ENCODE measurements at regions of chr5 and their contacts with region 1.

Region 1: GRCh38 chr5:132272311-132273210 is 15.1 kb downstream of the PDLIM4 start:
- DNase-seq: peak; percentile 58 to 75
- ATAC-seq: peak; percentile 69 to 83; a peak in 5 of 6 replicates
- H3K4me3 ChIP-seq: no peak overlapping the region
- H3K27ac ChIP-seq: peak overlapping the region; percentile 46 to 78; a peak in 5 of 6 replicates
- H3K4me1 ChIP-seq: peaks cover 7% of the 10 kb centered on the region; the same call in 1 of the 3 replicates
- CTCF ChIP-seq: peak; percentile 85
- EP300 ChIP-seq: no peak
- POLR2A ChIP-seq: no peak
- RAD21 ChIP-seq: peak; percentile 70 to 75

Region 2: DNA sequence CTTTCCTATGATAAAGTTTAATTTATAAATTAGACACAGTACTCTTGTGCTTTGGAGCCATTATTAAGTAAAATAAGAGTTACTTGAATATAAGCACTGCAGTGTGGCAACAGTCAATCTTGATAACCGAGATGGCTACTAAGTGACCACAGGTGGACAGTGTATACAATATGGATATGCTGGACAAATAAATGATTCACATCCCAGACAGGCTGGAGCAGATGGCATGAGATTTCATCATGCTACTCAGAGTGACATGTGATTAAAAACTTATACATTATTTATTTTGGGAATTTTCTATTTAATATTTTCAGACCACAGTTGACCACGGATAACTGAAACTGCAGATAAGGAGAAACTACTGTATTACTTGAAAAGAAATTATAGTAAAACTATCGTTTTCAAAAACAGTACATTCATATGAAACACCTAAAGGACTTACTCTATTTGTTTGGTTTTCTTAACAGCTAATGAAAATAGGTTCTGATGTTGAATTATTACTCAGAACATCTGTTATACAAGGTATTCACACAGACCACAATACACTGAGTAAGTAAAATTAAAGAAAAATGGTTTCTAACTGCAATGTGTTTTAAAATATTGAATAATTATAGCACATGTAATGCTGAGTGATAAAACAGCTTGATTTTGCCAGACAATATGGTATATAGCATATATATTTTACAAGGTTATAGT is 1085.9 kb before region 1 on chr5:
- CTCF ChIA-PET with region 1: no interaction called
- POLR2A ChIA-PET with region 1: no interaction called
- DNase-seq: peak in 1 of 2 experiments; percentile 62
- ATAC-seq: peak; percentile 69 to 95
- H3K4me3 ChIP-seq: no peak overlapping the region
- H3K27ac ChIP-seq: peak overlapping the region; percentile 55 to 69; a peak in 5 of 6 replicates
- H3K4me1 ChIP-seq: peaks cover 22% of the 10 kb centered on the region
- CTCF ChIP-seq: no peak
- EP300 ChIP-seq: peak; percentile 29 to 62; a peak in 2 of 5 replicates
- POLR2A ChIP-seq: no peak
- RAD21 ChIP-seq: no peak

Region 3: DNA sequence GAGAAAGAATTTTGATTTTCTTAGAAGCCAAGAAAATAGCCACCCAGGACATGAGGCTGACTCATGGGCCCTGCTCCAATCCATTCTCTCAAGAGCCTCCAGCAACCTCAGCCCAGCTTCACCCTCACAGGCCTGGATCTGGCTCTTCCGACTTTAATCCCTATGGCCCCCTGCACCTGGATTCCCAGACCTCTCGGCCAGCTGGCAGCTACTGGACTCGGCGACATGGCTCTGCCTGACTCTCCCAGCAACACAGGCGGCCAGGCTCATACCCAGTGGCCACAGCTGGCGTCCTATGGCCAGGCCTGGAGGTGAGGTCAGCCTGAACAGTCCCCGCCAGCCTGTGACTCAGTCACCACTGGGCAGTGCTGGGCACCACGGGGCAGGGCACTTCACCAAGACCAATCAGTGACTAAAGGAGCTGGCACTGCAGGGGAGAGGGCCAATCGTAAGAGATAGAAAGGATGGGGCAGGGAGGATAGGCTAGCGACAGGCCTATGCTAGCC is 21.3 kb before region 1 on chr5:
- CTCF ChIA-PET with region 1: interaction called, 11 read pairs
- POLR2A ChIA-PET with region 1: no interaction called
- DNase-seq: no peak
- ATAC-seq: peak in 1 of 2 experiments; percentile 53; a peak in 3 of 6 replicates
- H3K4me3 ChIP-seq: no peak overlapping the region
- H3K27ac ChIP-seq: no peak overlapping the region
- H3K4me1 ChIP-seq: peaks cover 8% of the 10 kb centered on the region; the same call in 2 of the 3 replicates
- CTCF ChIP-seq: no peak
- EP300 ChIP-seq: no peak
- POLR2A ChIP-seq: no peak
- RAD21 ChIP-seq: no peak

Region 4: DNA sequence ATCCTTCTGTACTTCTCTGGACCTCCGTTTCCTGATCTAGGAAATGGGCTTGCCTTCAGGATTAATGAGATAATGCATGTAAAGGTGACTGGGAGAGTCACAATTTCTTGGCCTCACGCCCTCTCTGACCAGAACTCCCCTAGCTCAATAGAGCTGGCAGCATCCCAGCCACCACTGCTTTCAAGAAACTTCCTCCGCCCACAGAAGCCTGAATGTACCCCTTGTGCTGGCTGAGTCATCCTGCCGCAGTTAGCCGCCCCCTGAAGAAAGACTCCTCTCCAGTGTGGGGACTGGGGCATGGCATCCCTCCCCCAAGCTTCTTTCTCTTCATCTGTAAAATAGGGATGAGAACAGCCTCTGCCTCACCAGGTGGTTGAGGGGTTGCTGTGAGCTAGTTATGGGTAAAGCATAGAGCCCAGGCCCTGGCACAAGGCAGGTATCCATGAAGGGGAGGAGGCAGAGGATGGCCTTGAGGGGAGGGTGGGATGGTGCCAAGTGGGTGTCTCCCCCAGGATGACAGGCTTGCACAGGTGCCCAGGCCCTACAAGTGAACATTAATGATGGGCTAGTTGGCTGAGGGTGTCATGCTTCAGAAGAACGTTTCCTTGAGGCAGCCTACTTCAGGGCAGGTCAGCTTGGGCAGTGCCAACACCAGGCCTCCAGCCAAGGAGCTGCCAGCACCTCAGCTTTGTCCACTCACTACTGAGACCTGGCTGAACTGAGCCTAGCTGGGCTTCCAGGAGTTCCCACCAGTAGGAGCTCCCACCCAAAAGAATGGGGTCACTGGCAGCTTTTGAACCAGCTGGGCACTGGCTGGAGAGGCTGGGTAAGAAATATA is 11.6 kb before region 1 on chr5:
- CTCF ChIA-PET with region 1: interaction called, 63 read pairs
- POLR2A ChIA-PET with region 1: no interaction called
- DNase-seq: no peak
- ATAC-seq: no peak
- H3K4me3 ChIP-seq: no peak overlapping the region
- H3K27ac ChIP-seq: peak overlapping the region in 1 of 2 experiments; percentile 72; a peak in 3 of 6 replicates
- H3K4me1 ChIP-seq: peaks cover 44% of the 10 kb centered on the region
- CTCF ChIP-seq: no peak
- EP300 ChIP-seq: no peak
- POLR2A ChIP-seq: no peak
- RAD21 ChIP-seq: no peak

Region 5: DNA sequence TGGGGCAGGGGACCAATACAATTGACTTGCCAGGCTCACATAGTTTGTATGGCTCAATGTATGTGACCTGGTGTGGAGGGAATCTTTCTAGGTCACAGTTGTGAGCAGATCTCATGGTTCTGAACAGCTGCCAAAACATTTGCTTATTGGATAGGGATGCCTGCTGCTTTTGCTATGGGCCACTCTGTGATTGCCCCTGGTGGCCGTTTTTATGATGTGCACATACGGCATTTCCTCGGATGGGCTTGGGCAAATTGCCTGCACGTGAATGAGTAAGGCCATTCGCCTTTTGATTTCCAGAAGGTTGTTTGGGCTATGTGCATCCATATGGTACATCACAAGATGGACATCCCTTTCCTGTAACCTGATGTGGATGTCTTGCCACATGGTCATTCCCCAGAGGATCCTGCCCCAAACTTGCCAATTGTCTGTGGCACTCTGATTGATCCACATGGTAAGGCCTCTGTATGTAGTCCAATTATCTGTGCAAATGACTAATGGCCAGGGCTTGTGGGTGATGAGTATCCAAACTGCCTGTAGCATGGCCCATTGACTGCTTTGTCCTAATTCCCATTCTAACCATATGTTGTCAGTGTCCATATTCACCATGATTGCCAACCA is 11.0 kb after region 1 on chr5:
- CTCF ChIA-PET with region 1: interaction called, 27 read pairs
- POLR2A ChIA-PET with region 1: no interaction called
- DNase-seq: peak; percentile 43 to 57
- ATAC-seq: peak; percentile 48 to 87; a peak in 4 of 6 replicates
- H3K4me3 ChIP-seq: no peak overlapping the region
- H3K27ac ChIP-seq: no peak overlapping the region
- H3K4me1 ChIP-seq: no peaks in the 10 kb centered on the region
- CTCF ChIP-seq: peak; percentile 21; the same call in 2 of the 3 replicates
- EP300 ChIP-seq: no peak
- POLR2A ChIP-seq: no peak
- RAD21 ChIP-seq: peak in 1 of 2 experiments; percentile 32; a peak in 1 of 5 replicates

Region 6: GRCh38 chr5:132293066-132293991 is 20.8 kb after region 1 on chr5:
- CTCF ChIA-PET with region 1: interaction called, 27 read pairs
- POLR2A ChIA-PET with region 1: interaction called, 13 read pairs
- DNase-seq: peak; percentile 91
- ATAC-seq: peak; percentile 67 to 74
- H3K4me3 ChIP-seq: peak overlapping the region; percentile 65
- H3K27ac ChIP-seq: peak overlapping the region; percentile 95 to 99
- H3K4me1 ChIP-seq: peaks cover 30% of the 10 kb centered on the region
- CTCF ChIP-seq: peak; percentile 20; the same call in 1 of the 3 replicates
- EP300 ChIP-seq: 0 out of 5 replicates have a peak, but pooled peaks of 1 of the 2 experiments have one; percentile 14
- POLR2A ChIP-seq: peak; percentile 94
- RAD21 ChIP-seq: no peak

Region 7: DNA sequence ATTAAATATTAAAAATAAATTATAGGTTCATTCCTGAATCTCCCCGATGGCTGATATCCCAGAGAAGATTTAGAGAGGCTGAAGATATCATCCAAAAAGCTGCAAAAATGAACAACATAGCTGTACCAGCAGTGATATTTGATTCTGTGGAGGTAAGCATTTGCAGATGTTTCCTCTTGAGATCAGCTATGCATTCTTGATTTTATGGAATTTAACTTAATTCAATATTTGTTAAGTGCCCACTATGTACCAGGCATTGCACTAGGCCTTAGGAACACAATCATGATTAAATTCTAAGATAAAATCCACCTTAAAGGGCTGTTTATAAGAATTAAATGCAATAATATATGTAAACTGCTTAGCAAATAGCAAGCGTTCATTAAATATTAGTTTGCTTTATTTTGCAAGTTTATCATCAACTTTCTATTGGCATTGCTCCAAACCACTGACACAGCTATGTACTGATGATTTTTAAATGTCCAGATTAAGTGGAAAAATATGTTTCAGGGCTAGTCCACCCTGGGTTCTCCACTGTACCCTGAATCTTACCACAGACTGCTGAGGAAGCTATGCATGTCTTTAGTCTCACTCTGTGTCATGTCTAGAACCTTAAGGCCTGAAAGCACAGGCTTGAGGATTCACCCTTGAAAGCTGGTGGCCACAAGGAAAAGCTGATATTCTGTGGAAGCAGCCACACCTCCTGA is 54.8 kb after region 1 on chr5:
- CTCF ChIA-PET with region 1: interaction called, 12 read pairs
- POLR2A ChIA-PET with region 1: no interaction called
- DNase-seq: no peak
- ATAC-seq: no peak
- H3K4me3 ChIP-seq: no peak overlapping the region
- H3K27ac ChIP-seq: no peak overlapping the region
- H3K4me1 ChIP-seq: peaks cover 9% of the 10 kb centered on the region; the same call in 2 of the 3 replicates
- CTCF ChIP-seq: no peak
- EP300 ChIP-seq: no peak
- POLR2A ChIP-seq: no peak
- RAD21 ChIP-seq: no peak

Region 8: DNA sequence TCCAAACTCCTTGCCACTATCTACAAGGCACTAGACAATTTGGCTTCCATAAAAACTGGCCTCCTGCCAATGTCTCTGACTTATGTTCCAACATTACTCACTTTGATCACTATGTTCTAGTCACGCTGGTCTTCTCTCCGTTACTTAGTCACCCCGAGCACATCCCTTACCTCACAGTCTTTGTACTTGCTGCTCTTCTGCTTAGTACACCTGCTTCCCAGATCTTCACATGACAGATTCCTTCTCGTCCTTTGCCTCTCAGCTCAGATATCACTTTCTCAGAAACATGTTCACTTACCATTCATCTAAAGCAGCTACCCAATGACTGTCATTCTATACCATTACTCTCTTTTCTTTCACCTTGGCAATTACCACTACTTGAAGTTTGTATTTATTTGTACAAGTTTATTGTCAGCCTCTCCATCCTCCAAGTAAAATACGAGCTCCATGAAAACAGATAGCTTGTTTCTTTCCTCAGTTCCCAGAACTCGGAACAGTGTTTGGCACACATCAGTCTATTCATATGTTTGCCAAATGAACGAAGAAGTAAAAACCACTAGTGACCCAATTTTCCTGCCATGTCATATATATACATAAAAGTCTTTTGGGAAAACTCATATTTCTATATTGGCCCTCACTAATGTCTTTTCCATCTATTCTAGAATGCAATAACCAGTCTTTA is 91.0 kb after region 1 on chr5:
- CTCF ChIA-PET with region 1: interaction called, 24 read pairs
- POLR2A ChIA-PET with region 1: no interaction called
- DNase-seq: peak; percentile 70 to 90
- ATAC-seq: peak; percentile 76 to 88
- H3K4me3 ChIP-seq: peak overlapping the region; percentile 26; the same call in 1 of the 3 replicates
- H3K27ac ChIP-seq: peak overlapping the region; percentile 92 to 94
- H3K4me1 ChIP-seq: peaks cover 67% of the 10 kb centered on the region
- CTCF ChIP-seq: no peak
- EP300 ChIP-seq: peak in 1 of 2 experiments; percentile 64; a peak in 2 of 5 replicates
- POLR2A ChIP-seq: no peak
- RAD21 ChIP-seq: no peak

Region 9: DNA sequence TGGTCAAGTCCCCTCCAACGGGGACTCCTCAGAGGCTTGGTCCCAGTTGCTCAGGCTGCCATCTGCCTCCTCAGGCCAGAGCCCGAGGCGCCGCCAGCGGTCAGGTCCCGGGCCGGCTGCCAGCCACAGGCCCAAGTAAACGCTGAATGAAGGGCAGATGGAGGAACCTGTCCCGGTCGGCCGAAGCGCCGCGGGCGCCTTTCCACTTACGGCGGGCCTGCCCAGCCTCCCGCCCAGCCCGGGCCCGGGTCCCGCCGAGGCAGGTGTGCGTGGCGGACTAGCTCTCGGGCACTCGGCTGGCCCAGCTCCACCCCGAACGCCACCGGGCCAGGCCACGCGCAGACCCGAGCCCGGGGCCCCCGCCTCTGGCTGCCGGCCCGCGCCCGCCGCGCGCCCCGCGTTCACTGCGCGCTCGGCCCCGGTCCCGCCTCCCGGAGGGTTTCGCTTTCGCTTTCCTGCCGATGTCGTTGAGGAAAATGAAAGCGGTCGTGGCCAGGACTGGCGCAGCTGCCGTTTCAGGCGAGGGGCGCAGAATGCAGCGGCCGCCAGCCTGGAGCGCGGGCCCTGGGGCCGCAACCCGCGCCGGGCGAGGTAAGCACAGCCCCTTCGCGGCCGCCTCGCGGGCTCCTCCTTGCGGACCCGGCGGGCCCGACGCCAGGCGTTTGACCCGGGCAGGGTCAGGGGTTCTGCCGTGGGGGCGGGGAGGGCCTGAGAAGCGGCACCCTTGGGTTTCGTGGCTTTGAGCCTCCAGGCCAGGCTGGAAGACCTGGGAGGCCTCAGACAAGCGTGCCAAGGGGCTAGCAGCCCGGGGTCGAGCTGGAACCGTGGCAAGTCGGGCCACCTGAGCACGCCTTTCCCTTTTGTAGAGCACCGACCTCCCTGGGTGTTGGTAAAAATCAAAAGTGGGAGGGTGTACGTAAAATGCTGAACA is 138.2 kb after region 1 on chr5:
- CTCF ChIA-PET with region 1: no interaction called
- POLR2A ChIA-PET with region 1: no interaction called
- DNase-seq: peak; percentile 79 to 87
- ATAC-seq: peak; percentile 94 to 95
- H3K4me3 ChIP-seq: peak overlapping the region; percentile 69
- H3K27ac ChIP-seq: peak overlapping the region; percentile 96 to 98
- H3K4me1 ChIP-seq: peaks cover 33% of the 10 kb centered on the region
- CTCF ChIP-seq: peak; percentile 74
- EP300 ChIP-seq: no peak
- POLR2A ChIP-seq: peak; percentile 73
- RAD21 ChIP-seq: peak; percentile 52 to 78

Measured in A549 (cell line).